HepG2 (cell line): ENCODE measurements at regions of chr6 and their contacts with region 1.

Region 1: GRCh38 chr6:105087571-105088211 is 92.1 kb downstream of the POPDC3 start:
- DNase-seq: peak; percentile 46
- ATAC-seq: peak; percentile 48
- H3K4me3 ChIP-seq: no peak overlapping the region
- H3K27ac ChIP-seq: no peak overlapping the region
- H3K4me1 ChIP-seq: peaks cover 6% of the 10 kb centered on the region; the same call in 1 of the 2 replicates
- H3K27me3 ChIP-seq: no peaks in the 10 kb centered on the region
- CTCF ChIP-seq: peak; percentile 79
- EP300 ChIP-seq: no peak
- POLR2A ChIP-seq: no peak
- RAD21 ChIP-seq: peak; percentile 51

Region 2: GRCh38 chr6:105015482-105015881 is 72.2 kb before region 1 on chr6:
- CTCF ChIA-PET with region 1: no interaction called
- POLR2A ChIA-PET with region 1: no interaction called
- in situ Hi-C with region 1: no loop called
- intact Hi-C with region 1: no loop called
- DNase-seq: no peak
- ATAC-seq: no peak
- H3K4me3 ChIP-seq: no peak overlapping the region
- H3K27ac ChIP-seq: no peak overlapping the region
- H3K4me1 ChIP-seq: peaks cover 12% of the 10 kb centered on the region; the same call in 1 of the 2 replicates
- H3K27me3 ChIP-seq: no peaks in the 10 kb centered on the region
- CTCF ChIP-seq: no peak
- EP300 ChIP-seq: no peak
- POLR2A ChIP-seq: no peak
- RAD21 ChIP-seq: no peak

Region 3: DNA sequence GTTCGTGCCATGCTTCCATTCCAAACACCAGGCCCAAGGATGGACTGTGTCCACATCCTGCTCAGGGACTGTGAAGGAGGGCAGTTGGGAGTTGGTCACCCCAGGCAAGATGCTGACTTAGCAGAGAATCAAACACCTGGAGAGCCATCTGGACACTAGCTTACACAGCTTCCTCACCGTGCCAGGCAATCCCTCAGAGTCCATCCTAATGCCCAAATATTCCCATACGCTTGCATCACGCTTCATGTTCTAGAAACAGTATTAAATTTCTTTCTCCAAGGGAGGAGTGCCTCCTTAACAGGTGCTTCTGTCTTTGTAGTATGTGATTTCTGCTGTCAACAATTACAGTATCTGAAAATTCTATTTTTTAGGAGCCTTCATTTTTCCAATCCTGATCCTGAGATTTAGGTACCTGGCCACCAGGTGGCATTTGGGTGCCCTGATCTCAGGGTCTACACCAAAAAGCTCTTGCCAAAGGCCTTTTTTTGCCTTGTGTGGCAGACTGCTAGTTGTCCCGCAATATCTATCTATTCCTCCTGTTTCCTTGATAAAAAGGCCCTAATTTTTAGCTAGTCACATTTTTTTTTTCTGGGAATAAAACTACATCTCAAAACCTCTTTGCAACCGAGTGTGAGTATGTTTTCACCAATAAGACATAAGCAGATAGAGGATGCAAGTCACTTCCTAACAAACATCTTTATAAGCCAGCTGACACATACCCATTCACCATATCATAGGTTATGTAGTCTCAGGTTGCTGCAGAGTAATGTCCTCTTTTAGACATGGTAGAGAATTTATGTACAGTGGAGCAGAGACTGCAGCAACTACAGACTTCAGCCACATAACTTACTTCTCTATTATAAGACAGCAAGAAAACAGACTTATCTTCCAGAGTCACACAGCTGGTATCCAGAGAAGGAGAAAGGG is 230.2 kb after region 1 on chr6:
- CTCF ChIA-PET with region 1: no interaction called
- POLR2A ChIA-PET with region 1: no interaction called
- in situ Hi-C with region 1: no loop called
- intact Hi-C with region 1: loop called (anchors 1 kb)
- DNase-seq: peak; percentile 8
- ATAC-seq: peak; percentile 71
- H3K4me3 ChIP-seq: no peak overlapping the region
- H3K27ac ChIP-seq: no peak overlapping the region
- H3K4me1 ChIP-seq: no peaks in the 10 kb centered on the region; the same call in 1 of the 2 replicates
- H3K27me3 ChIP-seq: no peaks in the 10 kb centered on the region
- CTCF ChIP-seq: peak; percentile 32; the same call in 1 of the 2 replicates
- EP300 ChIP-seq: no peak
- POLR2A ChIP-seq: no peak
- RAD21 ChIP-seq: no peak

Region 4: DNA sequence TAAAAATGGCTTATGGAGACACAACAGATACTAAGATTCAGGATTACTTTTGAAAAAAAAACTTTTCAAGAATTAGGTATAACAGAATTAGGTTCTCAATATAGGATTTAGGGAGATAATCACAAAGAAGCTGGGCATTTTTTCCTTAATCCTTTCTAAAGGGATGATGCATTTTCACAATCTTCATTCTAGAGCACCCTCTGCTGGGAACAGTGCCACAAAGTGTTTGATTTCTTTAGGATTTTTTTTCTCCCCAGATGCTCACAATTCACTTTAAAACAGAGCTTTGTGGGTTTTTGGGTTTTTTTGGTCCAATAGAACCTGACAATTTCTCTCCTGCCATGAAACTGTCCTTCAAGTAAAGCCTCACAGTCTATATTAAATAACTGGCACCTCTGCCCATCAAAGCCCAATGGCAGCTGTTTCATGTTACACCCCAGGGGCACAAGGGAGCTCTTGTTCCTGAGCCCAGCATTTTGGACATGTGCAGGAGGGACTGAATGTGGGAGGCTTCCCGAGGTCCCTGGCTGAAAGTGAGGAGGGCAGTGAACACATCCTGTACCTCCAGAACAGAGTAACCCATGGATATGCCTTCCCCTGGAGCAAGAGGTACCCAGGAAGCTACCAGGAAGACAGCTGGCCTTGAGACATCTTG is 275.5 kb after region 1 on chr6:
- CTCF ChIA-PET with region 1: no interaction called
- POLR2A ChIA-PET with region 1: no interaction called
- in situ Hi-C with region 1: no loop called
- intact Hi-C with region 1: loop called (anchors 2 kb)
- DNase-seq: no peak
- ATAC-seq: no peak
- H3K4me3 ChIP-seq: no peak overlapping the region
- H3K27ac ChIP-seq: no peak overlapping the region
- H3K4me1 ChIP-seq: no peaks in the 10 kb centered on the region
- H3K27me3 ChIP-seq: no peaks in the 10 kb centered on the region
- CTCF ChIP-seq: peak; percentile 11; the same call in 1 of the 2 replicates
- EP300 ChIP-seq: no peak
- POLR2A ChIP-seq: no peak
- RAD21 ChIP-seq: no peak

Region 5: GRCh38 chr6:105424175-105424783 is 336.6 kb after region 1 on chr6:
- CTCF ChIA-PET with region 1: interaction called, 14 read pairs
- POLR2A ChIA-PET with region 1: no interaction called
- in situ Hi-C with region 1: no loop called
- intact Hi-C with region 1: loop called (anchors 1 kb)
- DNase-seq: peak; percentile 37
- ATAC-seq: peak; percentile 63
- H3K4me3 ChIP-seq: no peak overlapping the region
- H3K27ac ChIP-seq: no peak overlapping the region
- H3K4me1 ChIP-seq: peaks cover 20% of the 10 kb centered on the region
- H3K27me3 ChIP-seq: no peaks in the 10 kb centered on the region
- CTCF ChIP-seq: peak; percentile 73
- EP300 ChIP-seq: no peak
- POLR2A ChIP-seq: no peak
- RAD21 ChIP-seq: no peak